ENCODE measurements at regions of chr1 and their contacts with region 1.

Region 1: DNA sequence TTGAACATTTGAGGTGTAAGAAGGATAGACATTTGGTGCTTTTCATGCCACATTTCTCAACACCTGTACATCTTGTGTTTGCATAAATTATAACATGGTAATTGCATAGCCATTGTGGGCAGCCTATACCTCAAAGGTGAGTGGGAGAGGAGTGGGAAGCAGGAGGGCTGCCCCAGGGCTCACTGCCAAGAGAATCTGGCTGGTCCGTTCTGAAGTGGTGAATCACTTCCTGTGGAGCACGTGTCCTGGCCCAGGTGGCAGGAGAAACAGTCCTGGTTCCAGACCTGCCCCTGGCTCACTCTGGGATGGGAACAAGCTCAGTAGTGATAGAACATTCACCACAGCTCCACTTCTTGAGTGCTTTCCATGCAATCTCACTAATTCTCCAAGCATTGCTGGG is 11.6 kb upstream of the OLFML2B start:
- DNase-seq: no peak

Region 2: GRCh38 chr1:161792740-161793139 is 242.5 kb before region 1 on chr1:
- intact Hi-C with region 1: loop called (anchors 2 to 5 kb)
- DNase-seq: no peak

Region 3: DNA sequence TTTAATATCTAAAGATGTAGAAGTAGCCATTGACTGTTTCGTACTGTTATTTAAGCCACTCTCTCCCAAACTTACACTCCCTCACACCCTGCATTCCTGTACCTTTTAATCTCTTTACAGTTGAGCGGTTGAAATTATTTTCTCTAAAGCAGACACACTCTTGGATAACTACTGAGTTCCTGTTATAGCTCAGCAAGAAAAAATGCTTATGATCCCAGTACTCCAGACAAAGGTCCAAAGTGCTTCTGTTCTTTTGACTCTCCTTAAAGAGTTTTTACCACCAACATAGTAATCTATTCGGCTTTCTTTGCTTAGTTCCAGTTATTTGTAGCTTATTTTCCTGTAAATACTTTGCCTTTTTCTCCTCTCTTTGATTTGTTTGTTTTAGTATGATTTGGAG is 169.0 kb before region 1 on chr1:
- intact Hi-C with region 1: no loop called
- DNase-seq: no peak

Region 4: DNA sequence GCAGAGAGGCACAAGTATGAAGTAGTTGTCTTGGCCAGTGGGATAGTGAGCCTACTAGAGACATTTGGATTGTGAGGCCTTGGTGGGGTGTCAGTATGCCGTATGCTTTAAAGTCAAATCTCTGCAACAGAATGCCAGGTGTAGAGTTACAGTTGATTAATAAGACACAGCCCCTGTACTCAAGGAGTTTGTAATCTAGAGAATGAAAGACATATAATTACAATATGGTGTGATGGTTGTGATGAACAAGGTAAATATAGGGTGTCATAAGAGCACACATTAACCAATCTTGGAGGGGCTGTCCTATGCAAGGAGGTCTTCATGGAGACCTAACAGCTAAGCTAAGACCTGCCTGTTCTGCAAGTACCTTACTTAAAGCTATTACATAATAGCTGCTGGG is 156.0 kb before region 1 on chr1:
- intact Hi-C with region 1: loop called in 1 of 2 experiments (anchors 5 kb)
- DNase-seq: no peak

Region 5: DNA sequence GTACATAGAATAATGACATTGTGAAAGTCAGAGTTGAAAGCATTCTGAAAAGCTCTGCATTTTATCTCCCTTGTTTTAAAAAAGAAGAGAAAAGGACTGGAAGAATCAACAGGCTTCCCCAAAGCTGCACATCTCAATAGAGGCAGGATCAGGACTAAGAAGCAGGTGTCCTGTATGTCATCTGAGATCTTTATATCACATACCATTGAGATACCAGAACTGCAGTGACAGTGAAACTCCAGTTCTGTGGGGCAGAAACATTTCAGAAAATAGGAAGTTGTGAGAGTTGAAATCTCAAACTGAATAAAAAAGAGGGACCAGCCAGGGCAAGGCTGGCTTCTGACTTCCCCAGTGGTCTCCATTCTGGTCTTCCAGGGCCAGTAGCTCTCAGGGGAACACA is 409.7 kb after region 1 on chr1:
- intact Hi-C with region 1: no loop called
- DNase-seq: no peak